Activated naive CD4-positive, alpha-beta T cell treated with anti-CD3 and anti-CD28 coated beads for 36 hours (primary cell): ENCODE measurements at regions of chr13 and their contacts with region 1.

Region 1: GRCh38 chr13:41310963-41311606 is at the start of gene NAA16:
- DNase-seq: peak; percentile 96
- H3K4me3 Mint-ChIP-seq: peak within 1 kb of the TSS; percentile 94
- H3K27ac Mint-ChIP-seq: peak within 1 kb of the TSS; percentile 95
- H3K4me1 Mint-ChIP-seq: peaks cover 31% of the 10 kb centered on the region
- H3K27me3 Mint-ChIP-seq: no peaks in the 10 kb centered on the region
- total RNA-seq, gene NAA16: 29.6 to 31.5 TPM

Region 2: GRCh38 chr13:41019011-41019487 is 292.0 kb before region 1 on chr13 and contains the start of gene ELF1:
- CTCF ChIA-PET with region 1: no interaction called
- intact Hi-C with region 1: loop called (anchors 5 kb)
- DNase-seq: peak; percentile 67
- H3K4me3 Mint-ChIP-seq: peak within 1 kb of the TSS; percentile 89
- H3K27ac Mint-ChIP-seq: peak within 1 kb of the TSS; percentile 99
- H3K4me1 Mint-ChIP-seq: peaks cover 32% of the 10 kb centered on the region
- H3K27me3 Mint-ChIP-seq: no peaks in the 10 kb centered on the region
- total RNA-seq, gene ELF1: 61.7 to 62.3 TPM

Region 3: GRCh38 chr13:41132512-41133152 is 178.5 kb before region 1 on chr13 and contains the start of gene KBTBD6:
- CTCF ChIA-PET with region 1: no interaction called
- intact Hi-C with region 1: loop called (anchors 2 kb)
- DNase-seq: peak; percentile 98
- H3K4me3 Mint-ChIP-seq: peak within 1 kb of the TSS; percentile 92
- H3K27ac Mint-ChIP-seq: peak within 1 kb of the TSS; percentile 87
- H3K4me1 Mint-ChIP-seq: peaks cover 35% of the 10 kb centered on the region
- H3K27me3 Mint-ChIP-seq: no peaks in the 10 kb centered on the region
- total RNA-seq, gene KBTBD6: 3.9 to 4.0 TPM

Region 4: DNA sequence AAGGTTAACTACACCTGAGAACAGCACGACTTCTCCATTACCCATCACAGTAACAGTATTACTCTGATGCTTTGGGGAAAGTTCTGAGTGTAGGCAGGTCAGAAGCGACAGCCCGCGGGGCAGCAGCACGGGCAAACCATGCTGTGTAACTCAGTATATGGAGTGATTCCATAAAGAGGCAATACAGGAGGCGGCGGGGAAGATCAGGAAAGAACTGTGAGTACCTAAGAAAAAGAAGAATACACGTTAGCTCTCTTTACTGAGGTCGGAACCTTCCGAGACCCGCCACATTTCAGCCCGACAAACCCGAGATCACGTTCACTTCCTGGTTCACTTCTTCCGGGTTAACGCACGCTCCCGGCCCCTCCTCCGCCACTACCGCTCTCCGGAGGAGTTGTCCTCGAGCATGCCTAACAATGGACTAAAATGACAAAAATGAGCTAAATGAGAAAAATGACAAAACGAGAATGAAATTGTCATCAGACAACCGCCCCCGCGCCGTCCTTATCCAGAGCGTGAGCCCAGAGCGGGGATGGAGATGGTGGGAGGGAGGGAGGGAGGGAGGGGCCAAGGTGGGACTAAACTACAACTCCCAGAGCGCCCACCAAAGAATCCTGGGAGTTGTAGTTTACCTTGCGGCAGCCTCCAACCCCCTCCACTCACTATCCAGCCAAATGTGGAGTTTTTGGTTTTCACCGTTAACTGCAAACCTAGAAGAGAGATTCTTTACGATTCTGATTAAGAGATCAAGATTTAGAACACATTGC is 47.6 kb before region 1 on chr13 and contains the start of gene MTRF1:
- CTCF ChIA-PET with region 1: no interaction called
- intact Hi-C with region 1: loop called (anchors 1 kb)
- DNase-seq: peak; percentile 84
- H3K4me3 Mint-ChIP-seq: peak within 1 kb of the TSS; percentile 90
- H3K27ac Mint-ChIP-seq: peak within 1 kb of the TSS; percentile 95
- H3K4me1 Mint-ChIP-seq: peaks cover 24% of the 10 kb centered on the region
- H3K27me3 Mint-ChIP-seq: no peaks in the 10 kb centered on the region
- total RNA-seq, gene MTRF1: 23.2 to 28.4 TPM

Region 5: DNA sequence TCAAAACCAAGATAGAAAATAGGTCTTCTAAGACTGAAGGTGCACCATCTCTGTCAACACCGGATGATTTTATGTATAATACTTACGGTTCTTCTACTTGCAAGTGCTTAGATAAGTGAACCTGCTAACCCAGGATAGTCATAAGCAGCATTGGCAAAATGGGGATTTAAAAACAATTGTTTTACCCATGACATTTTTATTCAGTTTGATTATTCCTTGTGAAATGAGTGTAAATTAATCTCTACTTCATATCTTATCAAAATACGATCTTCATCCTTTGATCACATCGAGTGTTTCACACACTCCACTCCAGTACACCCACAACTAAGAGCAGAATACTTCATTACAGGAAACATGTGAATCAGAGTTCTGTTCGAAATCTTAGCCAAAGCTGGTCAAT is 24.7 kb before region 1 on chr13:
- CTCF ChIA-PET with region 1: no interaction called
- intact Hi-C with region 1: loop called (anchors 1 kb)
- DNase-seq: no peak
- H3K4me3 Mint-ChIP-seq: peak overlapping the region; percentile 43
- H3K27ac Mint-ChIP-seq: peak overlapping the region; percentile 52
- H3K4me1 Mint-ChIP-seq: peaks cover 30% of the 10 kb centered on the region
- H3K27me3 Mint-ChIP-seq: no peaks in the 10 kb centered on the region

Region 6: GRCh38 chr13:41960639-41961465 is 649.8 kb after region 1 on chr13 and contains the start of gene VWA8:
- CTCF ChIA-PET with region 1: no interaction called
- intact Hi-C with region 1: loop called (anchors 2 kb)
- DNase-seq: peak; percentile 84
- H3K4me3 Mint-ChIP-seq: peak within 1 kb of the TSS; percentile 95
- H3K27ac Mint-ChIP-seq: peak within 1 kb of the TSS; percentile 92
- H3K4me1 Mint-ChIP-seq: peaks cover 53% of the 10 kb centered on the region
- H3K27me3 Mint-ChIP-seq: no peaks in the 10 kb centered on the region
- total RNA-seq, gene VWA8: 21.2 to 21.5 TPM